H1 (cell line): ENCODE measurements at regions of chr6 and their contacts with region 1.

Region 1: GRCh38 chr6:143337201-143337949 is 113.1 kb downstream of the ADAT2 start:
- DNase-seq: peak; percentile 70 to 98
- H3K4me3 ChIP-seq: no peak overlapping the region
- H3K27ac ChIP-seq: no peak overlapping the region
- H3K4me1 ChIP-seq: no peaks in the 10 kb centered on the region; a peak in 1 of 7 replicates
- H3K27me3 ChIP-seq: no peaks in the 10 kb centered on the region
- CTCF ChIP-seq: peak; percentile 92 to 99 (median 98)
- EP300 ChIP-seq: no peak
- POLR2A ChIP-seq: no peak
- RAD21 ChIP-seq: peak; percentile 90 to 91

Region 2: GRCh38 chr6:142474531-142475289 is 862.7 kb before region 1 on chr6:
- CTCF ChIA-PET with region 1: interaction called, 10 read pairs
- POLR2A ChIA-PET with region 1: no interaction called
- DNase-seq: peak; percentile 33 to 76
- H3K4me3 ChIP-seq: peak overlapping the region in 1 of 4 experiments; percentile 30; a peak in 1 of 8 replicates
- H3K27ac ChIP-seq: no peak overlapping the region
- H3K4me1 ChIP-seq: peaks cover 0 to 4% (median 0%) of the 10 kb centered on the region in 4 experiments; a peak in 1 of 7 replicates
- H3K27me3 ChIP-seq: no peaks in the 10 kb centered on the region
- CTCF ChIP-seq: peak; percentile 68 to 83 (median 70)
- EP300 ChIP-seq: no peak
- POLR2A ChIP-seq: no peak
- RAD21 ChIP-seq: peak; percentile 80 to 83

Region 3: GRCh38 chr6:143160439-143161220 is 176.7 kb before region 1 on chr6:
- CTCF ChIA-PET with region 1: no interaction called
- POLR2A ChIA-PET with region 1: no interaction called
- DNase-seq: no peak
- H3K4me3 ChIP-seq: no peak overlapping the region
- H3K27ac ChIP-seq: no peak overlapping the region
- H3K4me1 ChIP-seq: no peaks in the 10 kb centered on the region
- H3K27me3 ChIP-seq: no peaks in the 10 kb centered on the region
- CTCF ChIP-seq: no peak
- EP300 ChIP-seq: no peak
- POLR2A ChIP-seq: no peak
- RAD21 ChIP-seq: no peak

Region 4: DNA sequence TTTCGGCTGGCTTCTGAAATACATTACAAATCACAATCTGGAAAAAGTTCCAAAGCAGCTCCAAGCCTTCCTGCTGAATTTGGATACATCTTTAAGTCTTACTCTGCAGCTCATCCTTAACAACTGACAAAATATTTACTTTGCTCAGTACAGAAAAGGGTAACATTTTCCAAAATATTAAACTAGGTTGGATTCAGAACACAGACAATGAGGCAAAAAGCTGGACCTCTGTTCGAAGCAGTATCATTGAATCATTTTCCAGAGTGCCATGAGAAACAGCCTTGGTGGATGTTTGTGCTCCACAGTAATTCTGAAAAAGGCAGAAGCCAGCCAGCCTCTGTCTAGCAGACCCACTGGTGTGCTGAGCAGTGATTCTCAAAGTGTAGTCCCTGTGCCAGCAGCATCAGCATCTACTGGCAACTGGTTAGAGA is 114.6 kb before region 1 on chr6:
- CTCF ChIA-PET with region 1: interaction called, 80 read pairs
- POLR2A ChIA-PET with region 1: no interaction called
- DNase-seq: no peak
- H3K4me3 ChIP-seq: no peak overlapping the region
- H3K27ac ChIP-seq: no peak overlapping the region
- H3K4me1 ChIP-seq: peaks cover 0 to 6% (median 1%) of the 10 kb centered on the region in 4 experiments; a peak in 1 of 7 replicates
- H3K27me3 ChIP-seq: no peaks in the 10 kb centered on the region
- CTCF ChIP-seq: no peak
- EP300 ChIP-seq: no peak
- POLR2A ChIP-seq: no peak
- RAD21 ChIP-seq: no peak

Region 5: DNA sequence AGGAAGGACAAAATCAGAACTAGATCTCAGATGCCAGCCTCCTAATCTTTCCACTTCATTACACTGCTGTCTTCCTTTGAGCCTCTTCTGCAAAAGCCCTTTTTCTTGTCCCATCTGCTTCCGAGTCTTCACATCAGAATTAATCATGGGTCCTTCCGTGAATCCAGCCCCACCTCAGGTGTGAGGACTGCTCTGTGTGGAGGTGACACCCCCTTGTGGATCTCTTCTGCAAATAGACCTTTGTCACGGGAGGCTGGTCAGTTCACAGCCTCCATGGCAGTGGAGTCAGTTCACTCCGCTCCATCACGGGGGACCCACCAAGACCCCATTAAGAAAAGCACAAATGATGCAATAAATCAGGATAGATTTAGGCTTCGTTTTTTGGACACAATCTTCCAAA is 58.0 kb before region 1 on chr6:
- CTCF ChIA-PET with region 1: interaction called, 18 read pairs
- POLR2A ChIA-PET with region 1: no interaction called
- DNase-seq: no peak
- H3K4me3 ChIP-seq: no peak overlapping the region
- H3K27ac ChIP-seq: no peak overlapping the region
- H3K4me1 ChIP-seq: no peaks in the 10 kb centered on the region
- H3K27me3 ChIP-seq: no peaks in the 10 kb centered on the region
- CTCF ChIP-seq: peak; percentile 46 to 63 (median 56)
- EP300 ChIP-seq: no peak
- POLR2A ChIP-seq: no peak
- RAD21 ChIP-seq: peak; percentile 74 to 81

Region 6: DNA sequence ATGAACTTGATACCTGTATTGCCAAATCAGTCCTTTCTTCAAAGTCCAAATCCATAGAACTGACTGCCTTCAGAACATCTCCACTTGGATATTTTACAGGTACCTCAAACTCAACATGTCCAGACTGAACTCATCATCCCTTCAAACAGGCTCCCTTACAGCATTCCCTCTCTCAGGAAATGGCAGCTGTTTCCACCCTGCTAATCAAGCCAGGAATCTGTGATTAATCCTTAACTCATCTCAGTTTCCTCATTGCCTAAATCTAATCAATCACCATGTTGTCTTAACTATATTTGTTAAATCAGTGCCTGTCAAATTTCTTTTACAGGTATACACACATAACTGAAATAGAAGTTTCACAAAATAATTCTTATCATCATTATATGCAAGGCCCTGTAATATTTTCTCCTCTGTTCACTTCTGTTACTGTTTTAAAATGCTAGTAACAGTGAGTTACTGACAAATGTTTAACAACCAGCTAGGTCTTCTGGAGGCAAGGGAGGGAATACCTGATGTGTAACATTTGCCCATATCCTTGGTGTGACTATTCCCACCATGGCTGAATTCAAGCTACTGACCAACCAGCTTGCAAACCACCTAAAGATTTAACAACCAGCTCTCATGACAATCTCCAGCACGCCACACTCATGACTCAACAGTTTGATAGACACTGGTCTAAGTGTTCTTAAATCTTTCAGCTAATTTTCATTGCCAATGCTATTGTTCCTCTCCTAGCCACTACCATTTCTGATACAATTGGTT is 11.8 kb before region 1 on chr6:
- CTCF ChIA-PET with region 1: interaction called, 11 read pairs
- POLR2A ChIA-PET with region 1: no interaction called
- DNase-seq: no peak
- H3K4me3 ChIP-seq: no peak overlapping the region
- H3K27ac ChIP-seq: no peak overlapping the region
- H3K4me1 ChIP-seq: no peaks in the 10 kb centered on the region
- H3K27me3 ChIP-seq: no peaks in the 10 kb centered on the region
- CTCF ChIP-seq: no peak
- EP300 ChIP-seq: no peak
- POLR2A ChIP-seq: no peak
- RAD21 ChIP-seq: no peak

Region 7: GRCh38 chr6:143397229-143398222 is 60.2 kb after region 1 on chr6:
- CTCF ChIA-PET with region 1: interaction called, 15 read pairs
- POLR2A ChIA-PET with region 1: no interaction called
- DNase-seq: peak in 1 of 2 experiments; percentile 44
- H3K4me3 ChIP-seq: no peak overlapping the region
- H3K27ac ChIP-seq: no peak overlapping the region
- H3K4me1 ChIP-seq: peaks cover 0 to 13% (median 2%) of the 10 kb centered on the region in 4 experiments; a peak in 3 of 7 replicates
- H3K27me3 ChIP-seq: no peaks in the 10 kb centered on the region
- CTCF ChIP-seq: no peak
- EP300 ChIP-seq: no peak
- POLR2A ChIP-seq: no peak
- RAD21 ChIP-seq: 0 out of 4 replicates have a peak, but pooled peaks of 1 of the 2 experiments have one; percentile 8